Cardiac septum (tissue), 1 donor: ENCODE measurements at regions of chr2 and their contacts with region 1.

Region 1: DNA sequence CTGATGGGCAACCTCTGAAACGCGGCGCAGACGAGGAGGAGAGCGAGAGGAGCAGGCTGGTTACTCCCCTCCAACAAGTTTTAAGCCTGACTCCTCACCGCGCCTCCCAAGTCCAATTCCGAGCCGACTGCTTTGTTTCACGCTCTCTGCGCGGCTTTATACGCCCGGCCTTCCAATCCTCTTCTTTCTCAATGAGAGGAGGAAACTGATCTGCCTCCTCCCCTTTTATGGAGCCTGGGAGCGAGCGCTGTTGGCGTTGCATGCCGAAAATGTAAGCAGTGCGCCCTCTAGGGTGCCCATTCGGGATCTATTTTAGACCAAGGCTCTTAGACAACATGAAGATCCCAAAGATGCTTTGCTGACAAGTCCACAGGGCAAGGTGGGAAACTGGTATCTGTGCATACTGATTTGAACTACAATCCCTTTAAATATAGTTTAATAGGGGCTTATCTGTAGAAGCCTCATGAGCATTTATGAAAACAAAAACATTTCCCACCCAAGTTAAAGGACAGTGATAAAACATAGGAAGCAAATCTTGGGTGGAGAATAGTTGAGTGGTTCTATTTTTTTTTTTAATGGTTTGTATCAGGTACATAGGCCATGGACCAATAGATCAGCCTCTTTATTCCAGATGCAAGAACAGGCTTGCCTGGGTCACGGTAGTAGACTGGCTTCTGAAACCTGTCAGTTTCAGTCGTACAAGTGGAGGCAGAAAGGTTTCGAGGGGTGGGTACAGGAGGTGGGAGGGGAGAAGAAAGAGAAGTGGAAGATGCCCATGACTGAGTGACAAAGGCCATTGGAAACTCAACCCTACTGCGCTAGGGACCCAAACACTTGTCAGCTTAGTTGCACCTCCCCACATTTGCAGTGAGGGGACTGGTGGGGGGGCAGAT is at the start of gene RND3:
- DNase-seq: peak; percentile 95
- total RNA-seq, gene RND3: 46.9 TPM

Region 2: GRCh38 chr2:149587220-149587949 is 900.4 kb before region 1 on chr2 and contains the start of gene MMADHC:
- intact Hi-C with region 1: loop called (anchors 2 kb)
- DNase-seq: peak; percentile 97
- total RNA-seq, gene MMADHC: 117 TPM

Region 3: GRCh38 chr2:149799013-149799705 is 688.6 kb before region 1 on chr2:
- intact Hi-C with region 1: loop called (anchors 5 kb)
- DNase-seq: no peak

Region 4: DNA sequence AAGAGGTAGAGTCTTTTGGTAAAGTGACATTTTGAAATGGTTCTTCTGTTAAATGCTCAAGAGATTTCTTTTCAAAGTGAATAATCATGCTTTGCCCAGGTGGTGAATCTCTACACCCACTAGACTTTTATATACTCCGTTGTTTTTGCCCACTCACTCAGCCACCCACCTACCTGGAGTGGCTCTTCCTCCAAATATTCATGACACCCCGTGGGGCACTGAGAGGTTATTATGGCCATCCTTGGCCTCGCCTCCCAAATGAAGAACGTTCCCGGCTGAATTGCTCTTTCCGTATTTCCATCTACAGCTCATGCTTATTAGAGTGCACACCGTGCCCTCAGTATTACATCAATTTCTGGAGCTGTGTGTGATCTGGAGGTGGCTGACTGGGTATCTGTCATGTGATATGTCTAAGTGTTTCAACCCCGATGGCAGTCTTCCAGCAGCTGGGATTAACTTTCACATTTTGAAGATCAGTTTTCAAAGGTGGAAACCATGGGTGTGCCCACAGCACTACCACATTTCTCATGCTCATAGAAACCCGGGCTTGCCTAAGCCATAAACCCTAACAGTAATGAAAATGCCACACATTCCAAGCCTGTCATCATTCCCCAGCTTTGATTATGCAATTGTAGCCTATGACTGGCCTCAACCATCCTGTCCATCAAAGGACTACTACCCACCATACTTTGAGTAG is 493.6 kb before region 1 on chr2:
- intact Hi-C with region 1: loop called (anchors 5 kb)
- DNase-seq: no peak

Region 5: GRCh38 chr2:150425121-150425955 is 62.4 kb before region 1 on chr2:
- intact Hi-C with region 1: loop called (anchors 1 kb)
- DNase-seq: no peak

Region 6: DNA sequence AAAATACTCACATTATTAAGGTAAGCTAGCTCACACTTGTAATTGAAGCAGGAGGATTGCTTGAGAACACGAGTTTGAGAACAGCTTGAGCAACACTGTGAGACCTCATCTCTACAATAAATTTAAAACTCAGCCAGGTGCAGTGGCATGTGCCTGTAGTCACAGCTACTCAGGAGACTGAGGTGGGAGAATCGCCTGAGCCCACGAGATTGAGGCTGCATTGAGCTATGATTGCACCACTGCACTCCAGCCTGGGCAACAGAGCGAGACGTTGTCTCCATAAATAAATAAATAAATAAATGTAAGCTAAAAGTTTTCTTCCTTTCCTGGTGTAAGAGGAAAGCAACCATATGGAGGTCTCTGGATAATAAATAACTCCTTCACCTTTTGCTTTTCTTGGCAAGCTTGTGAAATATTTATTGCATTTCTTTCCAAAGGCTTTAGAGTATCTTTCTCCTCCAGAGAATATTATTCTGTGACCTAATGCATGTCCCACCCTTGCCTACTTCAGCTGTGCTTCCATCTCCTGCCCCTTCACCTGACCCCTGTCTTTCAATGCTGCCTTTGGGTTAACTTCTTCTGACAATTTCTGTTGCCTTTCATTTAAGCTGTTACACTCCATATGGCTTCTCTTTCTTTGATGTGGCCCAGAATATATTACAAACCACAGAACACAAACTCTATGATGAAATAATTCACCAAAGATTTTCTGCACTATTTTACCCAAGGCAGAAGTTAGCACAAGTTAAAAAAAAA is 280.4 kb after region 1 on chr2:
- intact Hi-C with region 1: no loop called
- DNase-seq: no peak